Activated CD8-positive, alpha-beta T cell treated with anti-CD3 and anti-CD28 coated beads, Interleukin-2, amount 10 ng/mL, durations not matched to agents 7 days and 5 days (primary cell): ENCODE measurements at regions of chr3 and their contacts with region 1.

Region 1: GRCh38 chr3:47989981-47990440 is 26.2 kb downstream of the MAP4 start:
- DNase-seq: peak; percentile 84
- ATAC-seq: peak; percentile 93
- H3K4me3 Mint-ChIP-seq: no peak overlapping the region
- H3K27ac Mint-ChIP-seq: no peak overlapping the region
- H3K4me1 Mint-ChIP-seq: peaks cover 5% of the 10 kb centered on the region
- H3K27me3 Mint-ChIP-seq: no peaks in the 10 kb centered on the region

Region 2: GRCh38 chr3:47836986-47837385 is 153.0 kb before region 1 on chr3:
- CTCF ChIA-PET with region 1: interaction called, 46 read pairs
- POLR2A ChIA-PET with region 1: no interaction called
- DNase-seq: no peak
- ATAC-seq: no peak
- H3K4me3 Mint-ChIP-seq: no peak overlapping the region
- H3K27ac Mint-ChIP-seq: no peak overlapping the region
- H3K4me1 Mint-ChIP-seq: no peaks in the 10 kb centered on the region
- H3K27me3 Mint-ChIP-seq: no peaks in the 10 kb centered on the region

Region 3: DNA sequence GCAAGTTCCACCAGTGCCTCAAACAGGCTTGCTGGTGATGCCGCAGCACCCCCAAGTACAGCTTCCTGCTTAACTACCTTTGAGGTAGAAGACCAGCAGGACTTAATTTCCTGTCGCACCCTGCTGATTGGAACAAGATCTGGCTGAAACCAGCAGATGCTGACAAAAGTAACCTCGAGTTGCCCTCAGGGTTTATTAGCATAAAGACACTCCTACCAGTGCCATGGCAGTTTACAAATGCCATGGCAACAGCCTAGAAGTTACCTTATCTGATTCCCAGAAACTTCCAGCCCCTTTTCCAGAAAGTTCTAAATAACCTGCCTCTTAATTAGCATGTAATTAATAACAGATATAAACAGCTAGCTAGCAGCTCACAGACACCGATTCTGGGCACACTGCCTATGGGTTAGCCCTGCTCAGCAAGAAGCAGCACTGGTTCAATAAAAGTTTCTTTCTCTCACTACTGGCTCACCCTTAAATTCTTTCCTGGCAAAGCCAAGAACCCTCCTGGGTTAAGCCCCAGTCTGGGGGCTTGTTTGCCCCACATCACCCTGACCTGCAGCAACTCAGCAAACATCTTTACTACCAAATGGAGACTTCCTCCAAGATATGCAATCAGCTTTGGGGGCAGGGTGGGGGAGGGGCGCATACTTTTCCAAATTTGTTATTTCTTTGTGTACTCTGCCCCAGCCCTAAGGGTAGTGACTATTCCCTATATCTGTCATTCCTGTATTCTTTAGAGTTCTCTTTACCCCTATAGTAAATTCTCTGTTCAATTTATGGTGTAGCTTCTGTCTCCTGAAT is 28.0 kb before region 1 on chr3:
- CTCF ChIA-PET with region 1: interaction called, 12 read pairs
- POLR2A ChIA-PET with region 1: no interaction called
- DNase-seq: peak; percentile 74
- ATAC-seq: peak; percentile 89
- H3K4me3 Mint-ChIP-seq: peak overlapping the region; percentile 29
- H3K27ac Mint-ChIP-seq: peak overlapping the region; percentile 85
- H3K4me1 Mint-ChIP-seq: peaks cover 28% of the 10 kb centered on the region
- H3K27me3 Mint-ChIP-seq: no peaks in the 10 kb centered on the region

Region 4: DNA sequence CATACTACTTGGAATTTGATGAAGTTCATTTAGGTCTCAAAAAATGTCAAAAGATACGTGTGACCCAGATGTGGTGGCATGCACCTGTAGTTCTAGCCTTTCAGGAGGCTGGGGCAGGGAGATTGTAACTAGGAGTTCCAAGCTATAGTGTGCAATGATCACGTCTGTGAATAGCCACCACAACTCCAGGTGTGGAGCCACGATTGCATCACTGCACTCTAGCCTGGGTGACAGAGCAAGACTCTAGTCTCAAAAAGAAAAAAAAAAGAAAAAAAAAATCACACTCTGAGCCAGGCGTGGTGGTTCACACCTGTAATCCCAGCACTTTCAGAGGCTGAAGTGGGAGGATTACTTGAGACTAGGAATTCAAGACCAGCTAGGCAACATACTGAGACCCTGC is 12.0 kb after region 1 on chr3:
- CTCF ChIA-PET with region 1: interaction called, 11 read pairs
- POLR2A ChIA-PET with region 1: no interaction called
- DNase-seq: no peak
- ATAC-seq: no peak
- H3K4me3 Mint-ChIP-seq: no peak overlapping the region
- H3K27ac Mint-ChIP-seq: no peak overlapping the region
- H3K4me1 Mint-ChIP-seq: no peaks in the 10 kb centered on the region
- H3K27me3 Mint-ChIP-seq: no peaks in the 10 kb centered on the region